MCF 10A (cell line): ENCODE measurements at regions of chr12 and their contacts with region 1.

Region 1: GRCh38 chr12:116818948-116819832 is 62.1 kb downstream of the HRK start:
- DNase-seq: peak; percentile 89
- H3K4me3 Mint-ChIP-seq: peak overlapping the region; percentile 81
- H3K27ac Mint-ChIP-seq: peak overlapping the region; percentile 96
- H3K4me1 Mint-ChIP-seq: peaks cover 7% of the 10 kb centered on the region
- H3K27me3 Mint-ChIP-seq: no peaks in the 10 kb centered on the region
- CTCF ChIP-seq: no peak

Region 2: GRCh38 chr12:116855744-116856470 is 36.7 kb after region 1 on chr12:
- CTCF ChIA-PET with region 1: interaction called, 6 read pairs
- POLR2A ChIA-PET with region 1: interaction called, 14 read pairs
- intact Hi-C with region 1: no loop called
- DNase-seq: peak; percentile 86
- H3K4me3 Mint-ChIP-seq: peak overlapping the region; percentile 35
- H3K27ac Mint-ChIP-seq: peak overlapping the region; percentile 93
- H3K4me1 Mint-ChIP-seq: peaks cover 18% of the 10 kb centered on the region
- H3K27me3 Mint-ChIP-seq: no peaks in the 10 kb centered on the region
- CTCF ChIP-seq: no peak